ENCODE measurements at regions of chr17 and their contacts with region 1.

Region 1: DNA sequence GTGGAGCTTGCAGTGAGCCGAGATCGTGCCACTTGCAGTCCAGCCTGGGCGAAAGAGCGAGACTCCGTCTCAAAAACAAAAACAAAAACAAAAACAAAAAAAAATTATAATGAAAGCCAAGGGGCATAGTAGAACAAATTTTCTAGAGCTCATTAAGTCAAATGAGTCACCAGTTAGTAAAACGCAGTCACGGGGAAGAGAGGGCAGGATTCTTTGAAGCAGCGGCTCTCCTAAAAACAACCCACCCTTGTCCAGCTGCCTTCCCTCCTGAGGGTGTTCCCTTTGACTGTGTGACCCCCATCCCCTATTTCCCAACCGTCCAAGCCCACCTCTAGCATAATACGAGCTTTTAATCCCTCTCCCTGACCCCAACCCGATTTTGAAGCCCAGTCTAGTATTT is 44.1 kb upstream of the STH start:
- DNase-seq: no peak
- H3K4me3 ChIP-seq: no peak overlapping the region
- H3K27ac ChIP-seq: no peak overlapping the region
- H3K4me1 ChIP-seq: no peaks in the 10 kb centered on the region
- H3K27me3 ChIP-seq: peaks cover 0 to 25% (median 0%) of the 10 kb centered on the region in 4 donors
- CTCF ChIP-seq: no peak
- EP300 ChIP-seq: no peak
- POLR2A ChIP-seq: no peak

Region 2: DNA sequence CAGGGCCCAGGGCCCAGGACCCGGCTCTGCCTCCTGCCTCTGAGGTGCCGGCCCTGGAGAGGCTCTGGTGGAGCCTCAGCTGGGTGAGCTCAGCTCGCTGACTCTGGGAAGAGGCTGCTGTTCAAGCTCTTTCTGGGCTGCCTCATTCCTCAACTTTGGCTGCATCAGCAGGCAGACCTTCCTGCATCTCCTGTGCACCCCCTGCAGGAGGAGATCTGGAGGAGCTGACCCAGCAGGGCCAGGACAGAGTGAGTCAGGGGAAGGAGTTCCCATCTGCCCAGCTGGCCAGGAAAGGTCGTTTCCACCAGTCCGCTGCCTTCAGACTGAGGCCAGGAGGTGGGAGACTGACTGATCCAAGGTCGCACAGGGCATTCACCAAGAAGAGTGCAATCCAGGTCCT is 160.1 kb before region 1 on chr17:
- intact Hi-C with region 1: no loop called
- DNase-seq: no peak
- H3K4me3 ChIP-seq: no peak overlapping the region
- H3K27ac ChIP-seq: no peak overlapping the region
- H3K4me1 ChIP-seq: peaks cover 0 to 6% (median 0%) of the 10 kb centered on the region in 4 donors
- H3K27me3 ChIP-seq: peaks cover 0 to 90% (median 10%) of the 10 kb centered on the region in 4 donors
- CTCF ChIP-seq: no peak
- EP300 ChIP-seq: no peak
- POLR2A ChIP-seq: no peak

Region 3: GRCh38 chr17:45894022-45894784 is 60.7 kb before region 1 on chr17 and contains the start of gene MAPT:
- intact Hi-C with region 1: loop called (anchors 5 kb)
- DNase-seq: peak; percentile 94
- H3K4me3 ChIP-seq: peak within 1 kb of the TSS; percentile 71 to 86 (median 82)
- H3K27ac ChIP-seq: peak within 1 kb of the TSS; percentile 66 to 73 (median 69)
- H3K4me1 ChIP-seq: peaks cover 24 to 35% (median 32%) of the 10 kb centered on the region in 4 donors
- H3K27me3 ChIP-seq: peaks cover 5 to 46% (median 24%) of the 10 kb centered on the region in 4 donors
- CTCF ChIP-seq: peak in 2 of 3 experiments; percentile 96 to 99
- EP300 ChIP-seq: no peak
- POLR2A ChIP-seq: no peak
- total RNA-seq, gene MAPT: 4.2 to 11.1 (median 7.3) TPM

Region 4: GRCh38 chr17:46003907-46004748 is 49.2 kb after region 1 on chr17:
- intact Hi-C with region 1: no loop called
- DNase-seq: no peak
- H3K4me3 ChIP-seq: no peak overlapping the region
- H3K27ac ChIP-seq: no peak overlapping the region
- H3K4me1 ChIP-seq: peaks cover 12 to 21% (median 20%) of the 10 kb centered on the region in 4 donors
- H3K27me3 ChIP-seq: no peaks in the 10 kb centered on the region
- CTCF ChIP-seq: no peak
- EP300 ChIP-seq: no peak
- POLR2A ChIP-seq: no peak